Activated CD4-positive, alpha-beta memory T cell treated with anti-CD3 and anti-CD28 coated beads for 36 hours (primary cell): ENCODE measurements at regions of chr4 and their contacts with region 1.

Region 1: GRCh38 chr4:152094970-152095700 is 334.3 kb upstream of the GATB start:
- DNase-seq: peak; percentile 27
- H3K4me3 Mint-ChIP-seq: no peak overlapping the region
- H3K27ac Mint-ChIP-seq: peak overlapping the region; percentile 48
- H3K4me1 Mint-ChIP-seq: peaks cover 63% of the 10 kb centered on the region
- H3K27me3 Mint-ChIP-seq: no peaks in the 10 kb centered on the region

Region 2: DNA sequence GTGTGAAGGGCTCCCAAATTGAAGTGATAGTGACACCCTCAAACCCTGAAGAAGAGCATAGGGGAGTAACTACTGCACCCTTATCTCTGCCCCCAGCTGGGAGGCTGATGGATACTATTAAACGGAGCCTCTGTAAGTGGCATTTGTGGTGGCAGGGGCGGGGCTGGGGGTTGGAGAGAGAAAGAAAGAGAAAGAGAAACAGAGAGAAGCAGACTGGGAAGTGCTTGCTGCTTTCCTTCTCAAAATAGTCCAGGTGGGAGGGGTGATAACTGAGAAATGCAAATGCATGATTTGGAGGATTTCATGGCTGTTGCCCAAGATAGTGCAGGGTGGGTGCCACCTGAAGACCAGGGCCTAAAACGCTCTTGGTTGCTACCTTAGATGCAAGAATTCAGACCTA is 80.9 kb before region 1 on chr4:
- CTCF ChIA-PET with region 1: no interaction called
- POLR2A ChIA-PET with region 1: no interaction called
- intact Hi-C with region 1: loop called (anchors 2 kb)
- DNase-seq: peak; percentile 72
- H3K4me3 Mint-ChIP-seq: no peak overlapping the region
- H3K27ac Mint-ChIP-seq: no peak overlapping the region
- H3K4me1 Mint-ChIP-seq: peaks cover 41% of the 10 kb centered on the region
- H3K27me3 Mint-ChIP-seq: no peaks in the 10 kb centered on the region

Region 3: DNA sequence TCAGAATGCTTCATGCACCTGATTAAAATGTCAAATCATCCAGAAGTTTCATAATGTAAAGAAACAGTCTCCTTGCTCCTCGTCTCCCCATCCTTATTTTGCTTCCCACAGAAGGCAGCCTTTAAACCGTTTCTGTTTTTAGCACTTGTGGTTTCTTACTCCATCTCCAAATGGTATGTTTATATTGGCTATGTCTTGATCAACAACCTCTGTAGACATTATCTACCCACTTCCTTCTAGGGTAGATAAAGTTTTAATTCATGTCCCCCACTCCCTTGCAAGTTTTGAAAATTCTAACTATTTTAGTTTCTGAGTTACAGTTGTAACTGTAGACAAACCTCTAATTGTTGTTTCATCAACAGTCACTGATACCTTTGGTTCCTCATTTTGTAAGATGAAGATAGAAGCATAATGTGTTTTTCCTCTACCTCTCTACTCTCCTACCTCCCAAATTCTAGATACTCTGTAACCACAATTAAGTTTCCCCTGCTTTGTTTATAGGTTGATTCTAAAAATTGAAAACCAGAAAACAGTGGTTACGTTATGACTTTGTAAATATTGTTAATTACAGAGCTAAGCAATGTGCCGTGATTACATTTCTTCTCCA is 42.6 kb before region 1 on chr4:
- CTCF ChIA-PET with region 1: no interaction called
- POLR2A ChIA-PET with region 1: no interaction called
- intact Hi-C with region 1: loop called (anchors 5 kb)
- DNase-seq: no peak
- H3K4me3 Mint-ChIP-seq: no peak overlapping the region
- H3K27ac Mint-ChIP-seq: no peak overlapping the region
- H3K4me1 Mint-ChIP-seq: peaks cover 19% of the 10 kb centered on the region
- H3K27me3 Mint-ChIP-seq: no peaks in the 10 kb centered on the region

Region 4: GRCh38 chr4:152255437-152256011 is 160.4 kb after region 1 on chr4:
- CTCF ChIA-PET with region 1: no interaction called
- POLR2A ChIA-PET with region 1: no interaction called
- intact Hi-C with region 1: loop called (anchors 1 kb)
- DNase-seq: peak; percentile 85
- H3K4me3 Mint-ChIP-seq: peak overlapping the region; percentile 5
- H3K27ac Mint-ChIP-seq: no peak overlapping the region
- H3K4me1 Mint-ChIP-seq: peaks cover 19% of the 10 kb centered on the region
- H3K27me3 Mint-ChIP-seq: no peaks in the 10 kb centered on the region